Activated CD8-positive, alpha-beta T cell treated with anti-CD3 and anti-CD28 coated beads, Interleukin-2, amount 10 ng/mL, durations not matched to agents 7 days and 5 days (primary cell): ENCODE measurements at regions of chr2 and their contacts with region 1.

Region 1: DNA sequence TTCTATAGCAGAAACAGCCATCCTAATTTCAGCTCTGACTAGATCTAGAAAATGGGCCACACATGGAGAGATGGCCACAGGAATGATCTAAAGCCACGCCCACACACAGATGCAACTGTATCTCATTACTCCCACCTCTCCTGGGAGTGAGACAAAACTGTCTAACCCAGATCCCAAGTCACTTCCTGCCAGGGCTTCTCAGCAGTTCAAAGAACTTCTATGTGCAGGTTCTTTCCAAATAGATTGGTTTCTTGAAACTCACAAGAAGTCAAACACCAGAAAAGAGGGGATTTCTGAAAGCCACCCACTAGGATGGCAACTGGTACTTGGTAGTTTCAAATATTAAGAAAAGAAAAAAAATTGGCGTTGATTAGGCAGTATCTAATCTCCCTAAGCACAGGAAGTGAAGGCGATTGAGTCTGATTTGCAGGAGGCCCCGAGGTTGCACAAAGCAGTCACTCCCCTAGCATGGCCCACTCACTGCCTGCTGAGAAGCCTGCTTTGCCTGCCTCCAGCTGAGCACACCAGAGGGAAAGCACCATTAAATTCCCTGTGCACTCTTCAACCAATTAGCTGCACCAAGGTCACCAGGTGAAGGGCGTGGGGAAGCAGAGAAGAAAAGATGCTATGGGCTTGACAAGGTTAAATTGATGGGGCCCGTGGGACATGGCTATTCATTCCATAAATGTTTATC is 51.1 kb downstream of the PAPOLG start:
- DNase-seq: peak; percentile 41
- ATAC-seq: peak; percentile 71
- H3K4me3 Mint-ChIP-seq: peak overlapping the region; percentile 17
- H3K27ac Mint-ChIP-seq: peak overlapping the region; percentile 89
- H3K4me1 Mint-ChIP-seq: peaks cover 28% of the 10 kb centered on the region
- H3K27me3 Mint-ChIP-seq: no peaks in the 10 kb centered on the region

Region 2: DNA sequence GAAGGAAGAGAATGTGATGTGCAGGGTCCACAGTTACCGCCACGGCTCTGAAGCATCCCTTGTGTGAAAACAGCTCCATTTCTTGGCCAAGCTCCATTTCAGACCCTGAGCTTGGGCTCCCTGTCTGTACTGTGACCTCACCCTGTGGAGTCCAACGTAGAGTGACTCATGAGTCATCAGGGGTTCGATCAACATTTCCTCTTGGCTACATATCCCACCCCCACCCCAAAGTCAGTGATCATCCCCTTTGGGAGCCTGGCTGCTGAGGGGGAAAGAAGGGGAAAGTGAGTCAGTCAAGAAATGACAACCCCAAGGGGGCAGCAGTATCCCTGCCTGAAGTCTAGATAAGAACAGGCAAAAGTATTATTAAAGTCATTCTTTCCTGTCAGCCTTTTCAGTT is 11.1 kb after region 1 on chr2:
- CTCF ChIA-PET with region 1: interaction called, 15 read pairs
- POLR2A ChIA-PET with region 1: interaction called, 5 read pairs
- DNase-seq: peak; percentile 44
- ATAC-seq: no peak
- H3K4me3 Mint-ChIP-seq: no peak overlapping the region
- H3K27ac Mint-ChIP-seq: peak overlapping the region; percentile 72
- H3K4me1 Mint-ChIP-seq: peaks cover 45% of the 10 kb centered on the region
- H3K27me3 Mint-ChIP-seq: peaks cover 7% of the 10 kb centered on the region

Region 3: GRCh38 chr2:61144697-61145268 is 337.6 kb after region 1 on chr2:
- CTCF ChIA-PET with region 1: no interaction called
- POLR2A ChIA-PET with region 1: no interaction called
- DNase-seq: peak; percentile 95
- ATAC-seq: peak; percentile 98
- H3K4me3 Mint-ChIP-seq: peak overlapping the region; percentile 86
- H3K27ac Mint-ChIP-seq: peak overlapping the region; percentile 89
- H3K4me1 Mint-ChIP-seq: peaks cover 5% of the 10 kb centered on the region
- H3K27me3 Mint-ChIP-seq: no peaks in the 10 kb centered on the region